Testis (tissue), 5 donors: ENCODE measurements at regions of chr6 and their contacts with region 1.

Region 1: GRCh38 chr6:170295510-170296422 is 4.9 kb upstream of the DLL1 start:
- DNase-seq: peak; percentile 42
- H3K4me3 ChIP-seq: peak overlapping the region; percentile 24 to 49
- H3K27ac ChIP-seq: no peak overlapping the region
- H3K4me1 ChIP-seq: peaks cover 28% of the 10 kb centered on the region
- H3K27me3 ChIP-seq: no peaks in the 10 kb centered on the region
- CTCF ChIP-seq: no peak
- POLR2A ChIP-seq: no peak

Region 2: GRCh38 chr6:169831450-169832246 is 464.1 kb before region 1 on chr6:
- intact Hi-C with region 1: loop called (anchors 10 kb)
- DNase-seq: peak; percentile 86
- H3K4me3 ChIP-seq: no peak overlapping the region
- H3K27ac ChIP-seq: no peak overlapping the region
- H3K4me1 ChIP-seq: no peaks in the 10 kb centered on the region
- H3K27me3 ChIP-seq: no peaks in the 10 kb centered on the region
- CTCF ChIP-seq: peak; percentile 87 to 95 (median 93)
- POLR2A ChIP-seq: no peak

Region 3: DNA sequence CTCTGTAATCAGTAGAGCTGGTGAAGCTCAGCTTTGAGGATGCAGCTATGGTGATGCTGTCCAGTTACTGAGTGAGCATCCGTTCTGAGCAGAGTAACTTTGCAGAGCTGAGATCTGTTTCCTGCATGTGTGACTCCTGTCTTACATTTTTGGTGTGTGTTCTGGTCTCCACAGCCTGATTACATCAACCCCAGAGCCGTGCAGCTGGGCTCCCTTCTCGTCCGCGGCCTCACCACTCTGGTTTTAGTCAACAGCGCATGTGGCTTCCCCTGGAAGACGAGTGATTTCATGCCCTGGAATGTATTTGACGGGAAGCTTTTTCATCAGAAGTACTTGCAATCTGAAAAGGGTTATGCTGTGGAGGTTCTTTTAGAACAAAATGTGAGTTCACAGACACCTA is 92.3 kb after region 1 on chr6:
- intact Hi-C with region 1: no loop called
- DNase-seq: no peak
- H3K4me3 ChIP-seq: no peak overlapping the region
- H3K27ac ChIP-seq: no peak overlapping the region
- H3K4me1 ChIP-seq: no peaks in the 10 kb centered on the region
- H3K27me3 ChIP-seq: no peaks in the 10 kb centered on the region
- CTCF ChIP-seq: no peak
- POLR2A ChIP-seq: no peak